ENCODE measurements at regions of chr14 and their contacts with region 1.

Region 1: DNA sequence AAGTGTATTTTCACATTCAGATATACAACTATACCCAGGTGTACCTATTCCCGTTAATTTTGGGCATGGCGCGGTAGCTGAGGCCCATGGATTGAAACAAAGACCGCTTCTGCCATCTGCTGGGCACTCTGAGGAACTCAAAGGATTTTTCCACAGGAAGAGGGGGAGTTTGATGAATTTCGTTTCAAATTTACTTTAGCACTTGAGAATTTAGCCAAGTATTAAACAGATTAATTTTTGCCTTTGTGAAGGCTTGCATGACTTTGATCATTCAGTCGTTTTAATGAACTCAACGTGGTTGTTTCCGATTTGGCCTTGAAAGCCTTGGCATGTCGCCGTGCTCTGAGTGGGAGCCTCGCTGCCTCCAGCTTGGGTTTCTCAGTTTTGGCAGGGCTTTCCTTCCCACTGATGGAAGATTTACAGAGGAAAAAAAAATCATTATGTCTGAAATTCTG is 153.2 kb upstream of the DDHD1 start:
- DNase-seq: peak; percentile 69
- ATAC-seq: peak; percentile 78
- H3K4me3 ChIP-seq: peak overlapping the region; percentile 56
- H3K27ac ChIP-seq: peak overlapping the region; percentile 38; the same call in 1 of the 2 replicates
- H3K4me1 ChIP-seq: peaks cover 10% of the 10 kb centered on the region
- H3K27me3 ChIP-seq: no peaks in the 10 kb centered on the region; the same call in 1 of the 2 replicates
- CTCF ChIP-seq: peak; percentile 80
- POLR2A ChIP-seq: no peak
- RAD21 ChIP-seq: peak; percentile 79

Region 2: GRCh38 chr14:52467515-52468266 is 838.6 kb before region 1 on chr14:
- CTCF ChIA-PET with region 1: no interaction called
- POLR2A ChIA-PET with region 1: no interaction called
- dilution Hi-C with region 1: no loop called
- in situ Hi-C with region 1: no loop called
- intact Hi-C with region 1: loop called (anchors 5 kb)
- DNase-seq: no peak
- ATAC-seq: no peak
- H3K4me3 ChIP-seq: no peak overlapping the region
- H3K27ac ChIP-seq: no peak overlapping the region
- H3K4me1 ChIP-seq: 0 out of 2 replicates have a peak, but pooled peaks cover 2% of the 10 kb centered on the region
- H3K27me3 ChIP-seq: no peaks in the 10 kb centered on the region
- CTCF ChIP-seq: no peak
- POLR2A ChIP-seq: no peak
- RAD21 ChIP-seq: no peak

Region 3: GRCh38 chr14:52824507-52824906 is 481.8 kb before region 1 on chr14:
- CTCF ChIA-PET with region 1: no interaction called
- POLR2A ChIA-PET with region 1: interaction called, 3 read pairs
- dilution Hi-C with region 1: no loop called
- in situ Hi-C with region 1: loop called (anchors 5 kb)
- intact Hi-C with region 1: loop called (anchors 5 kb)
- DNase-seq: peak; percentile 18
- ATAC-seq: no peak; the same call in 1 of the 2 replicates
- H3K4me3 ChIP-seq: no peak overlapping the region
- H3K27ac ChIP-seq: no peak overlapping the region
- H3K4me1 ChIP-seq: peaks cover 3% of the 10 kb centered on the region
- H3K27me3 ChIP-seq: no peaks in the 10 kb centered on the region
- CTCF ChIP-seq: no peak
- POLR2A ChIP-seq: no peak
- RAD21 ChIP-seq: no peak

Region 4: DNA sequence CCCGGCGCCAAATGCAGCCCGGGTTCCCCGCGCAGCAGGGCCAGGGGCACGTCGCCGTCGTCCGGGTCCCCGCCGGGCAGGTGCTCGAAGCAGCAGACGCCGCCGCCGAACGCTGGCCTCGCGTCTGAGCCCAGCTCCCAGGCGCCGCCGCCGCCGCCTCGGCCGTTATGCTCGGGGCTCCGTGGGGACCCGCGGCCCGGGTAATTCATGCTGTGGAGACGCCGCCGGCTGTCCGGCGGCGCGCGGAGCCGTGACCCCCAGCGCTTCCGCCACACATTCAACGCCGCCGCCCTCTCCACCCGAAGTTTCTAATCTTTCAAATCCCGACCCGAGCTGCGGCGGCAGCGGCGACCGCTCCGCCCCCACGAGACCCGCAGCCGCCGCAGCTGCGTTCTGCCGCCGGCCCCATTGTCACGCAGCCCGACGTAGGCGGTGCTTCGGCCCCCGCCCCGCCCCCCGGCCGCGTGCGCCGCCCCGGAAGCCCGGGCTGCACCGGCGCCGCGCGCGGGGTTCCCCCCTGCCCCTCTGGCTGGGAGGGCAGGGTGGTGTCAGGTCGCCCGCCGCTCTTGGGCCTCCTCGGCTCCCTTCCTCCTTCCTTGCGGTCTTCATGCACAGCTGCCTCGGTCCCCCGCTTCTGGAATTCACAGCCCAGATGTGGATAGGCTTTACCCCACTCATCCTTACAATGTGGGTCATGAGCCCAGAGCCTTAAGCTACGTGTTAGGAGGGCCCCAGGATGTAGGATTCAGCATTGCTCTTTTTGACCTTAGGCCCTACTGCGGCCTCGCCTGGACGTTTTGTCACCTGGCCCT is 153.2 kb before region 1 on chr14 and contains the start of gene DDHD1:
- CTCF ChIA-PET with region 1: no interaction called
- POLR2A ChIA-PET with region 1: no interaction called
- dilution Hi-C with region 1: no loop called
- in situ Hi-C with region 1: no loop called
- intact Hi-C with region 1: loop called (anchors 5 kb)
- DNase-seq: peak; percentile 65
- ATAC-seq: peak; percentile 88
- H3K4me3 ChIP-seq: peak within 1 kb of the TSS; percentile 95
- H3K27ac ChIP-seq: peak within 1 kb of the TSS; percentile 72
- H3K4me1 ChIP-seq: peaks cover 5% of the 10 kb centered on the region; the same call in 1 of the 2 replicates
- H3K27me3 ChIP-seq: no peaks in the 10 kb centered on the region
- CTCF ChIP-seq: no peak
- POLR2A ChIP-seq: 0 out of 2 replicates have a peak, but pooled peaks have one; percentile 22
- RAD21 ChIP-seq: no peak
- total RNA-seq, gene DDHD1: 9.0 and 14.2 TPM in 2 replicates

Region 5: DNA sequence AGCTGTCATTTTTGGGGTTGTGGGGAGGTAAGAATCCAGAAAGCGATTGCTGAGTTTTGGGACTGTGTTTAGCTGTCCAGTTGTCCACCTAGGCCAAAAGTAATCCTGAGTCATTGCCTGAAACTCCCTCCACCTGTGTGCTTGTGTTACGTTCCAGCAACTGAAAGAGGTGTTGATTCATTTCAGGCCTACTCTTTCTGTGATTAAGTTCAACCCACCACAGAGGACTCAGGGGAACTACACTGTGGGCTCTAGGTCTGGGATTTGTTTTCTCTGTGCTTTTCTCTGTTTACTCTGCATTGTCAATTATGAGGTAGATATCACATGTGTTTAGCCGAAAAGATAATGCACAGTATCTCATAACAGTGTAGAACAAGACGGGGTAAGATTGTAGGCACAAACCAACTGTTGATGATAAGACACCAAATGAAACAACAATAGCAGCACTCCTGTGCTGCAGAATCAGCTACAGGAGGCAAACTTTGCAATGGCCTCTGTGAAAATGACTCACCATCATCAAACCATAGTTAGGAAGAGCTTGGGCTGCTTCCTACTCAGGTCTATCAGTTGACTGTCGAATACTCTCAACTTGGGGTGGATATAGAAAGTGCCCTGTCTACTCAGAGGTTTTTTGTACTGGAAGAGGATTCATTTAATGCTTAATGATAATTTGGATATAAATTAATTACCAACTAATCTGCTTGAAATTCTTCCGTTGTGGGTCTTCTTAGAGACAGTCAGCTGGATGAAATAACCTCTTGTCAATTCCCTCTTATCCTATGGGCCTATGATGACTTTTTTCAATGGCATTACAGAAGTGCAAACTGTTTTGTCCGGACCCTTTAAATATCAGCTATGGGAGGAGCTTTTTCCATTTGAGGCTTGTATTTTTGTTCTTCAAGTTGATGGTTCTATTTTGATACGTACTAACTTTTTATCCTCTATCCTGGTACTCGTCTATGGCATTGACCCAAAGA is 264.4 kb after region 1 on chr14:
- CTCF ChIA-PET with region 1: no interaction called
- POLR2A ChIA-PET with region 1: no interaction called
- dilution Hi-C with region 1: no loop called
- in situ Hi-C with region 1: no loop called
- intact Hi-C with region 1: no loop called
- DNase-seq: no peak
- ATAC-seq: no peak
- H3K4me3 ChIP-seq: no peak overlapping the region
- H3K27ac ChIP-seq: peak overlapping the region; percentile 87; the same call in 1 of the 2 replicates
- H3K4me1 ChIP-seq: peaks cover 4% of the 10 kb centered on the region; the same call in 1 of the 2 replicates
- H3K27me3 ChIP-seq: peaks cover 2% of the 10 kb centered on the region; the same call in 1 of the 2 replicates
- CTCF ChIP-seq: no peak
- POLR2A ChIP-seq: no peak
- RAD21 ChIP-seq: no peak

Region 6: GRCh38 chr14:54347997-54348611 is 1041.8 kb after region 1 on chr14:
- CTCF ChIA-PET with region 1: interaction called, 5 read pairs
- POLR2A ChIA-PET with region 1: no interaction called
- dilution Hi-C with region 1: no loop called
- in situ Hi-C with region 1: no loop called
- intact Hi-C with region 1: loop called (anchors 5 kb)
- DNase-seq: peak; percentile 47
- ATAC-seq: peak; percentile 71
- H3K4me3 ChIP-seq: no peak overlapping the region
- H3K27ac ChIP-seq: no peak overlapping the region
- H3K4me1 ChIP-seq: peaks cover 5% of the 10 kb centered on the region; the same call in 1 of the 2 replicates
- H3K27me3 ChIP-seq: 0 out of 2 replicates have a peak, but pooled peaks cover 2% of the 10 kb centered on the region
- CTCF ChIP-seq: peak; percentile 77
- POLR2A ChIP-seq: no peak
- RAD21 ChIP-seq: peak; percentile 84